AG04450 (cell line): ENCODE measurements at regions of chr19 and their contacts with region 1.

Region 1: DNA sequence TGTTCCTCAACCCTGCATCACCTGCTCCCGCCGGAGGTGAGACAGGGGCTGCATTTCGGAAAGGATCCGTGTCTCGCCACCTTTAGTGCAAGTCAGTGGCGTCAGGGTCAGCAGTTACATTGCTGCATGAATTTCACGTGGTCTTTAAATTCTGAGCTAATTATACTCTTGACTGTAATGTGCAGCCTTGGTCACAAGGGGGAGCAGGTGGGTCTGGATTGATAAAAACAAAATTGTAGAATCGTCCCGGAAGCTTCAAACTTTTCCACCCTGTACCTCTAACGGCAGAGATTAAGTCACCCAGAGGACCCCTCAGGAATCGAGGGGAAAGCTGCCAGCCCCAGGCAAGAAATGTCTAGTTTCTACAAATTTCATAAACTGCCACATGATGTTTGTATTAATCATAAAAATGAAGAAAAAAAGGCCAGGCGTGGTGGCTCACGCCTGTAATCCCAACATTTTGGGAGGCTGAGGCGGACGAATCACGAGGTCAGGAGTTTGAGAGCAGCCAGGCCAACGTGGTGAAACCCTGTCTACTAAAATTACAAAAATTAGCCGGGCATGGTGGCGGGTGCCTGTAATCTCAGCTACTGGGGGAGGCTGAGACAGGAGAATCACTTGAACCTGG is 20.2 kb downstream of the BBC3 start:
- DNase-seq: peak; percentile 59
- H3K4me3 ChIP-seq: no peak overlapping the region
- H3K27ac ChIP-seq: peak overlapping the region; percentile 95
- H3K27me3 ChIP-seq: no peaks in the 10 kb centered on the region
- CTCF ChIP-seq: peak; percentile 84

Region 2: GRCh38 chr19:47152224-47153017 is 58.4 kb before region 1 on chr19:
- CTCF ChIA-PET with region 1: interaction called, 58 read pairs
- POLR2A ChIA-PET with region 1: interaction called, 3 read pairs
- DNase-seq: no peak
- H3K4me3 ChIP-seq: no peak overlapping the region
- H3K27ac ChIP-seq: no peak overlapping the region
- H3K27me3 ChIP-seq: no peaks in the 10 kb centered on the region
- CTCF ChIP-seq: no peak

Region 3: GRCh38 chr19:47157431-47158321 is 53.1 kb before region 1 on chr19:
- CTCF ChIA-PET with region 1: interaction called, 58 read pairs
- POLR2A ChIA-PET with region 1: interaction called, 3 read pairs
- DNase-seq: peak; percentile 50
- H3K4me3 ChIP-seq: no peak overlapping the region
- H3K27ac ChIP-seq: peak overlapping the region; percentile 69
- H3K27me3 ChIP-seq: no peaks in the 10 kb centered on the region
- CTCF ChIP-seq: 0 out of 2 replicates have a peak, but pooled peaks have one; percentile 5

Region 4: DNA sequence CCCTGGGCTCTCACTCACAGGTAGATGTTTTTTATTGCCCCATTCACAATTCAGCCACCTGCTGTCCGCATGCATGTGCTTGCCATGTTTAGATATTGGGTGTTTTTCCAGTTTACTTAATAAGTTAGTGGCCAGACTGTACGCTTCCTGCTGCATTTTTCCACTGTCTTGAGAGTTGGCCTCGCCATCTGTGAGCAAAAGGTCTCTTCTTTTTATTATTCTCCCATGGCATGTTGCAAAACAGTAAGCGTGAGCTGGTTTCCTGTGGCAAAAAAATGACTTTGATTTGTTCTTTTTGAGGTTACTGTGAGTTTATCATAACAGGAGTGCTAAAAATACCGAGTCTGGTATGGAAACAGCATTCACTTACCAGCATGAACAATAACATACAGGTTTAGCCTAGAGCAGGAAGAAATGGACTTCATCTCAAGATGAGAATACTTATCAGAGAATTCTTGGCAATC is 34.1 kb before region 1 on chr19:
- CTCF ChIA-PET with region 1: interaction called, 20 read pairs
- POLR2A ChIA-PET with region 1: no interaction called
- DNase-seq: peak; percentile 85
- H3K4me3 ChIP-seq: no peak overlapping the region
- H3K27ac ChIP-seq: peak overlapping the region; percentile 81
- H3K27me3 ChIP-seq: no peaks in the 10 kb centered on the region
- CTCF ChIP-seq: no peak